Tibial artery (tissue), 4 donors: ENCODE measurements at regions of chr16 and their contacts with region 1.

Region 1: GRCh38 chr16:82535262-82535661 is 91.5 kb upstream of the CDH13 start:
- DNase-seq: no peak
- H3K4me3 ChIP-seq: no peak overlapping the region
- H3K27ac ChIP-seq: no peak overlapping the region
- H3K4me1 ChIP-seq: no peaks in the 10 kb centered on the region
- H3K27me3 ChIP-seq: no peaks in the 10 kb centered on the region
- CTCF ChIP-seq: no peak

Region 2: GRCh38 chr16:80986557-80986956 is 1548.7 kb before region 1 on chr16:
- intact Hi-C with region 1: no loop called
- DNase-seq: no peak
- H3K4me3 ChIP-seq: no peak overlapping the region
- H3K27ac ChIP-seq: no peak overlapping the region
- H3K4me1 ChIP-seq: no peaks in the 10 kb centered on the region
- H3K27me3 ChIP-seq: no peaks in the 10 kb centered on the region
- CTCF ChIP-seq: no peak

Region 3: GRCh38 chr16:82626791-82627261 is 91.6 kb after region 1 on chr16 and contains the start of gene CDH13:
- intact Hi-C with region 1: no loop called
- DNase-seq: peak; percentile 54 to 73
- H3K4me3 ChIP-seq: peak within 1 kb of the TSS; percentile 74 to 84
- H3K27ac ChIP-seq: peak within 1 kb of the TSS; percentile 79 to 89
- H3K4me1 ChIP-seq: peaks cover 0 to 51% (median 40%) of the 10 kb centered on the region in 4 donors
- H3K27me3 ChIP-seq: no peaks in the 10 kb centered on the region
- CTCF ChIP-seq: no peak

Region 4: DNA sequence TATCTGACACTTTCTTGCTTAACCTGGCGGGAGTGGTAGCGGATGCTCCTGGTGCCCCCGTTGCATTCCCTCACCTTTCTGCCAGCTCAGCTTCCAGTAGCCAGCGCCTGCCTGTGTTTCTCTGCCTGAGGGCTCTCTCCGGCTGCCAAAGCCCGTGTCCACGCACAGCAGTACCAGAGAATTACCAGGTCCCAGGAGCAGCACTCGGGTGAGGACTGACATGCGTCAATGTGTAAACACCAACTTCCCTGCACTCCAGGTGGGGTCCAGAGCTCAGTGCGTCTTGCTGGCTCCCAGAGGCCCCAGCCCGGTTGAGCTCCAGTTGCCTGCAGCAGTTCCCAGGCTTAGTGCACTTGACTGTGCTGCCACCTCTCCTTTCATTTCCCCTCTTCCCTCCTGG is 146.3 kb after region 1 on chr16:
- intact Hi-C with region 1: loop called (anchors 5 kb)
- DNase-seq: no peak
- H3K4me3 ChIP-seq: no peak overlapping the region
- H3K27ac ChIP-seq: no peak overlapping the region
- H3K4me1 ChIP-seq: no peaks in the 10 kb centered on the region
- H3K27me3 ChIP-seq: no peaks in the 10 kb centered on the region
- CTCF ChIP-seq: no peak